ENCODE measurements at regions of chr6 and their contacts with region 1.

Region 1: GRCh38 chr6:136772685-136773472 is 19.4 kb downstream of the MAP3K5 start:
- DNase-seq: peak in 1 of 2 donors; percentile 38
- ATAC-seq: peak in 7 of 8 donors; percentile 49 to 87 (median 76)
- H3K4me3 ChIP-seq: no peak overlapping the region
- H3K27ac ChIP-seq: peak overlapping the region in 8 of 10 donors; percentile 47 to 67 (median 55)
- H3K4me1 ChIP-seq: peaks cover 0 to 64% (median 49%) of the 10 kb centered on the region in 9 donors
- H3K27me3 ChIP-seq: no peaks in the 10 kb centered on the region
- CTCF ChIP-seq: no peak

Region 2: DNA sequence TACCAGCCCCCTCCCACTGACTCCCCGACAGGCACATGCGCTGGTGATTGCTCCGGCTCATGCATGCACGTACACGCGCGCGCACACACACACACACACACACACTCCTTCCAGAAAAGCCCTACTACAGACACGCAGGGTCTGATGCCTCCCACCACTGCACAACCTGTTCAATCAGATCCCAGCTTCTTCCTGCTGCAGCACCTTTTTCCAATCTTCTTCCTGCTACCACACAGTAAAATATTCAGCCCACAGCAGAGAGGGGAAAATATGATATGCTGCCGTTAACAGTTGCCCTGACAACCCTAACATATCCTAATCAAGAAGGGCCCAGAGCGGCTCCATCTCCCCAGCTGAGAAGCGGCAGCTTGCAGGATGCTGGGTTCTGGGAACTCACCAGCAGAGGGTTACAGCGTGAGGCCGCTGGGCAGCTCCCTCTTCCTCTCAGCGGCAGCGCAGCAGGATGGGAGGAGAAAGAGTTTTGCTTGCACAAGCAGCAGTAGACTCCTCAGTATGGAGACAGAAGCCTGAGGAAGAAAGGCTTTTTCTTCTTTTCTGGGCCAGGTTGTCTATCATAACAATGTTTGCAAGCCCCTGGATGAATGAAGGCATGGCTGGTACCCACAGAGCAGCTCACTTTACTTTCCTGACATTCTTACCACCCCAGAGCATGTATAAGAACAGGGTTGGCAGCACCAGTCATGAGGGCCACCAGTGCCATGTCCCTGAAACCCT is 246.5 kb before region 1 on chr6:
- intact Hi-C with region 1: no loop called
- DNase-seq: peak; percentile 17 to 43
- ATAC-seq: peak; percentile 51 to 89 (median 78)
- H3K4me3 ChIP-seq: no peak overlapping the region
- H3K27ac ChIP-seq: no peak overlapping the region
- H3K4me1 ChIP-seq: peaks cover 0 to 14% (median 0%) of the 10 kb centered on the region in 9 donors
- H3K27me3 ChIP-seq: peaks cover 0 to 4% (median 0%) of the 10 kb centered on the region in 7 donors
- CTCF ChIP-seq: peak in 4 of 9 donors; percentile 31 to 45 (median 40)

Region 3: GRCh38 chr6:136744889-136745288 is 28.0 kb before region 1 on chr6:
- intact Hi-C with region 1: loop called in 1 of 10 experiments (anchors 1 kb)
- DNase-seq: no peak
- ATAC-seq: peak in 2 of 8 donors; percentile 62 to 77
- H3K4me3 ChIP-seq: peak overlapping the region in 5 of 10 donors; percentile 15 to 39 (median 25)
- H3K27ac ChIP-seq: peak overlapping the region in 6 of 10 donors; percentile 6 to 61 (median 36)
- H3K4me1 ChIP-seq: peaks cover 0 to 47% (median 22%) of the 10 kb centered on the region in 9 donors
- H3K27me3 ChIP-seq: no peaks in the 10 kb centered on the region
- CTCF ChIP-seq: no peak